ENCODE measurements at regions of chr3 and their contacts with region 1.

Region 1: DNA sequence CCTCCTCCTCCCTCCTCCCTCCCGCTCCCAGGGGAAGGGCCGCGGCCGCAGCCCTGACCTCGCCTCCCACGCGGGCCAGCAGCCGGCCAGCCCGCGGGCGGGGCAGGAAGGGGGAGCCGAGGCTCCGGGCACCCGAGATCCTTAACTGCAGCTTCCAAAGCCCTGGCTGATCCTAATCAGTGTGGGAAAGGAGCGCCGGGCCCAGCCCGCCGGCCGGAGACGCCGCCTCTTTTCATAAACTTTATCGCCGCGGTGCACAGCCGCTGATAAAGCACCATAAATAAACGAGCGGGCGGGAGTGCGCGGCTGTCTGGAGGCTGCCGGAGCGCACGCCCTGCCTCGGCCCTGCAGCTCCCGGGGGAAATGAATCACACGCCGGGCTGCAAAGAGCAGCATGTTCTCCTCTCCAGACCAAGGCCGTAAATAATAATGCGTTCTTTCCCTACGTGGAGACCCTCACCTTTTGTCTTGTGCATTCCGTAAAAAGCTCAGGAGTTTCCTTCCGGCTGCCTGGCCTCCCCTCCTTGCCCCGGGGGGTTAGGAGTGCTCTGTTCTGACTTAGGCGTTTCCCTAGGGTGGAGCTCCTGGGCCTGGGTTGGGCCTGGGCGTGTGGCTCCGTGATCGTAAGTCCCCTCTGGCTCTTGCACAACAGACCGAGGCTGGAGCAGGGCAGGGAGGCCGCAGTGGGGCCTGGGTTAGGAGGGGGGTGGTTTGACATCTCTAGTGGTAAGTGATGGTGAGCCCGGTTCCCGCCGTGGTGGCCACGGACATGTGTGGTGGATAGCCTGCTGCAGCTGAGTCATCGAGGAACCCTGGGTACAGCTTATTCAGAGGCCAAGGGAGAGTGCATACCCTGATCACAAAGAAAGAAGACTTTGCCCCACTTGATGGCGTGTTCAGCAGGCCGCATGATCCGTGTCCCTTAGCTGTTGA is 132.6 kb upstream of the HES1 start:
- DNase-seq: peak; percentile 99
- H3K4me3 ChIP-seq: no peak overlapping the region
- H3K27ac ChIP-seq: peak overlapping the region; percentile 97
- H3K4me1 ChIP-seq: peaks cover 35% of the 10 kb centered on the region
- H3K27me3 ChIP-seq: no peaks in the 10 kb centered on the region
- CTCF ChIP-seq: no peak
- POLR2A ChIP-seq: peak; percentile 22

Region 2: DNA sequence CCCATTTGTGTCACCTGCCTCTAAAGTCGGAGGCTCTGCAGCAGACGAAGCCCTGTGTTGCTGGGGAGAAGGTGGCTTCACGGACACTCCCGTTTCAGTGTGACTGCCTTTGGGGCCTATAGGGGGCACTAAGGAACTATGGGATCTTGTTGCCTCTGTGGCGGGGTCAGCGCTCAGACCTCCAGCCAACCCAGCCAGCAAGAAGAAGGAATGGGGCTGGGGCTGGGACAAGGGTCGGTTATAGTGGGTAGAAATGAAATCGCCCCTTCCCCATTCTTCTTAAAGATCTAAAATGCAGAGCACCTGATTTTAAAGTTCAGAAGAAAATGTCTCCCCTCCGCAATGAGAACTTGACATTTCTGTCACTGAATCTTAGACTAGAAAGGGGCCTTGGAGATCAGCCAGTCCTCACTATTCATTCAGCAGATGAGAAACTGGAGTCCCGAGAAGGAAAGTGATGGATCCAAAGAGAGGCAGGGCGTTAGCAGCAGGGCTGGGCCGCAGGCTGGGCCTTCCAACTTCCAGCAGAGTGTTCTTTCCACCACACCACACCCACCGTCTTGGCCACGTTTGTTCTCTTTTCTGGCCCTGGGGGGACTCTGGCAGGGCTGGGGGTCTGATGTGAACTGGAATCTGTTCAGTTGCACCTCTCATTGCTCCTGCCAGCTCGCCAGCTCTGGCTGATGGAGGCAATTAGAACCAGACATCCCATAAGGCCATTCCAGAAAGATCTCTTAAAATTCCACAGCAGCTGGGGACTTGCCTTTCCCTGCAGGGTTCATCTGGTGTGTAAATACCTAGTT is 215.0 kb before region 1 on chr3:
- CTCF ChIA-PET with region 1: interaction called, 5 read pairs
- POLR2A ChIA-PET with region 1: no interaction called
- dilution Hi-C with region 1: no loop called
- intact Hi-C with region 1: loop called (anchors 1 kb)
- DNase-seq: peak; percentile 76
- H3K4me3 ChIP-seq: no peak overlapping the region
- H3K27ac ChIP-seq: no peak overlapping the region
- H3K4me1 ChIP-seq: peaks cover 5% of the 10 kb centered on the region
- H3K27me3 ChIP-seq: peaks cover 0 to 1% of the 10 kb centered on the region in 2 experiments
- CTCF ChIP-seq: peak; percentile 82 to 88
- POLR2A ChIP-seq: no peak

Region 3: DNA sequence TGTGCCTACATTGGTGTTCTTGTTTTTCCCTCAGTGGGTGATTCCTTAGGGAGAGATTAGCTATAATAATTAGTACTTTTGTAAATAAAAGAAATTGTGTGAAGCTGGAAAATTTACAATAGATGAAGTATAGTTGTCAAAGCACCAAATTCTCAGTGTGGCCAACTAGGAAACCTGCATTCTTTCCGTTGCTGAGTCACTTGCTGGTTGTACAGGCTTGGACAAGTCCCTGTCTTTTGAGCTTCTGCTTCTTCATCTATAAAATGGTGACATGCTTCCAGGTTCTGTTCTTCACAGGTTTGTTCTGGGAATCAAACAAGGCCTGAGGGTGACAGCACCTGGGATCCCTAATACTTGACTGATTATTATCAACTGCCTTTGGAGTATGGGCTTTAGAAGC is 51.5 kb before region 1 on chr3:
- CTCF ChIA-PET with region 1: no interaction called
- POLR2A ChIA-PET with region 1: no interaction called
- dilution Hi-C with region 1: no loop called
- intact Hi-C with region 1: no loop called
- DNase-seq: no peak
- H3K4me3 ChIP-seq: no peak overlapping the region
- H3K27ac ChIP-seq: no peak overlapping the region
- H3K4me1 ChIP-seq: no peaks in the 10 kb centered on the region
- H3K27me3 ChIP-seq: peaks cover 11 to 21% of the 10 kb centered on the region in 2 experiments
- CTCF ChIP-seq: no peak
- POLR2A ChIP-seq: no peak

Region 4: GRCh38 chr3:193971261-193971751 is 32.1 kb before region 1 on chr3:
- CTCF ChIA-PET with region 1: interaction called, 17 read pairs
- POLR2A ChIA-PET with region 1: no interaction called
- dilution Hi-C with region 1: no loop called
- intact Hi-C with region 1: loop called (anchors 1 kb)
- DNase-seq: no peak
- H3K4me3 ChIP-seq: no peak overlapping the region
- H3K27ac ChIP-seq: no peak overlapping the region
- H3K4me1 ChIP-seq: peaks cover 20% of the 10 kb centered on the region
- H3K27me3 ChIP-seq: no peaks in the 10 kb centered on the region
- CTCF ChIP-seq: no peak
- POLR2A ChIP-seq: no peak

Region 5: DNA sequence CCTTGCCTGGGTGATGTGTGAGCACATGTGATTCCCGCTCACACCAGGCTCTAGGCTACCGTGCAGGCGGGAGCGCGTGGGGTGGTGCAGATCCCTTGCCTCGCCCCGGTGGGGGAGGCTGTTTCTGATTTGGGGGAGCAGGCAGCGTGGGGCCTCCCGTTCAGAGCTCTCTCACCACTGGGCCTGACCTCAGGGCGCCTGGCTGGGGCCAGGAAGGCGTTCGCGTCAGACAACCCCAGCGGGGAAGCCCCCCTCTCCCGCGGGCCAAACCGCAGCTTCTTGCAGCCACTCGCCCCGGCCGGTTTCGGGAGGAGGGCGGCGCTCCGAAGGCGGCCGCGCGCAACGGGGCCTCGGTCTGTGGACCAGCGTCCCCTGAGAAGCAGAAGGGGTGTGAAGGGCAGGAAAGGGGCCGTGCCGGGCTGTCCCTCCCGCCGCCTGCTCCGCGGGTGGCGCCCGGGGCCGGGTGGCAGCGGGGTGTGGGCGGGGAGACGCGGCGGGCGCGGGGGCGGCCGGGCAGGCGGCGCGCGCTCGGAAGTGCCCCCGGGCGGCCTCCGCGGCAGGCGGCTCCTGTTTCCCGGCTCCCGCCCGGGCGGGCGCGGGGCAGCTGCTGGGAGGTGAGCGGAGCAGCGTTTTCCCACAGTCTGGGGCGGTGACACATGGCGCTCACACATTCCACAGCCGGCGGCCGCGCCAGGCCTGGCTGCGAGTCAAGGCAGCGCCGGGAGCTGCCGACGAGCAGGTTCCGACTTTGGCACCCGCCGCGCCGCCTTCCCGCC is 67.4 kb after region 1 on chr3:
- CTCF ChIA-PET with region 1: interaction called, 5 read pairs
- POLR2A ChIA-PET with region 1: no interaction called
- dilution Hi-C with region 1: no loop called
- intact Hi-C with region 1: loop called (anchors 1 kb)
- DNase-seq: peak; percentile 98
- H3K4me3 ChIP-seq: peak overlapping the region in 2 of 3 experiments; percentile 23
- H3K27ac ChIP-seq: peak overlapping the region; percentile 87
- H3K4me1 ChIP-seq: peaks cover 15% of the 10 kb centered on the region
- H3K27me3 ChIP-seq: no peaks in the 10 kb centered on the region
- CTCF ChIP-seq: no peak
- POLR2A ChIP-seq: peak; percentile 45

Region 6: DNA sequence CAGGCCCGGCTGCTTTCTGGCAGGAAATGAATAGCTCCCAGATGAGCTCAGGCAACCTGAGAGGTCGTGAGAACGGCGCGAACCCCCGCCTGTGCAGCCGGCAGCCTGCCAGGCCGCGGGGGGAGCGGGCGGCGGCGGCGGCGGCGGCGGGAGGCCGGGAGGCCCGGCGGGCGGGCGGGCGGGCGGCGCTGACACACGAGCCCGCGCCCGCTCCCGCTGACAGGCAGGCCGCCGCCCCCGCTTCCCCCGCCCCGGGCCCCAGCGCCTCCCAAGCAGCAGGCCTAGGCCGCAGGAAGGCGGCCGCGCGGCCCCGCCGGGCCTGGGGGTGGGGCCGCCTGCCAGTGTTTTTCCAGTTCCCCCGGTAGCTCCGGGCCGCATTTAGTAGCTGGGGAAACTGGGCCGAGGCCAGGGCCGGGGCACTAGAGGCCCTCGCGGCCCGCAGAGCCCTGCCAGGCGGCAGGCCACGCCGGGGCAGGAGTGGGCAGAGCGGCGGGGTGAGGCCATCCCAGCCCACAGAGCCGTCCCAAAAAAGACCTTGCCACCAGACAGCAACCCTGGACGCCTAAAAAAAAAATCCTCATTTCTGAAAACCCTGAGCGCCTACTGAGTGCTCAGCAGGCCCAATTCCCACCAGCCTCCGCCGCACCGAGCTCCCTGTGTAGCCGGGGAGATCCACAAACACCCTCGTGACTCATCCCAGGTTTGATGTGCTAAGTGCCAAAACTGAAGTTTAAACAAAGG is 138.2 kb after region 1 on chr3:
- CTCF ChIA-PET with region 1: interaction called, 41 read pairs
- POLR2A ChIA-PET with region 1: interaction called, 16 read pairs
- dilution Hi-C with region 1: no loop called
- intact Hi-C with region 1: loop called (anchors 1 kb)
- DNase-seq: peak; percentile 93
- H3K4me3 ChIP-seq: no peak overlapping the region
- H3K27ac ChIP-seq: peak overlapping the region; percentile 99
- H3K4me1 ChIP-seq: peaks cover 40% of the 10 kb centered on the region
- H3K27me3 ChIP-seq: no peaks in the 10 kb centered on the region
- CTCF ChIP-seq: peak in 1 of 2 donors; percentile 14
- POLR2A ChIP-seq: no peak

Region 7: GRCh38 chr3:194306109-194306686 is 302.8 kb after region 1 on chr3:
- CTCF ChIA-PET with region 1: no interaction called
- POLR2A ChIA-PET with region 1: no interaction called
- dilution Hi-C with region 1: no loop called
- intact Hi-C with region 1: loop called (anchors 2 kb)
- DNase-seq: peak; percentile 89
- H3K4me3 ChIP-seq: no peak overlapping the region
- H3K27ac ChIP-seq: no peak overlapping the region
- H3K4me1 ChIP-seq: peaks cover 14% of the 10 kb centered on the region
- H3K27me3 ChIP-seq: peaks cover 2% of the 10 kb centered on the region in 2 experiments
- CTCF ChIP-seq: no peak
- POLR2A ChIP-seq: no peak